ENCODE measurements at regions of chr11 and their contacts with region 1.

Region 1: DNA sequence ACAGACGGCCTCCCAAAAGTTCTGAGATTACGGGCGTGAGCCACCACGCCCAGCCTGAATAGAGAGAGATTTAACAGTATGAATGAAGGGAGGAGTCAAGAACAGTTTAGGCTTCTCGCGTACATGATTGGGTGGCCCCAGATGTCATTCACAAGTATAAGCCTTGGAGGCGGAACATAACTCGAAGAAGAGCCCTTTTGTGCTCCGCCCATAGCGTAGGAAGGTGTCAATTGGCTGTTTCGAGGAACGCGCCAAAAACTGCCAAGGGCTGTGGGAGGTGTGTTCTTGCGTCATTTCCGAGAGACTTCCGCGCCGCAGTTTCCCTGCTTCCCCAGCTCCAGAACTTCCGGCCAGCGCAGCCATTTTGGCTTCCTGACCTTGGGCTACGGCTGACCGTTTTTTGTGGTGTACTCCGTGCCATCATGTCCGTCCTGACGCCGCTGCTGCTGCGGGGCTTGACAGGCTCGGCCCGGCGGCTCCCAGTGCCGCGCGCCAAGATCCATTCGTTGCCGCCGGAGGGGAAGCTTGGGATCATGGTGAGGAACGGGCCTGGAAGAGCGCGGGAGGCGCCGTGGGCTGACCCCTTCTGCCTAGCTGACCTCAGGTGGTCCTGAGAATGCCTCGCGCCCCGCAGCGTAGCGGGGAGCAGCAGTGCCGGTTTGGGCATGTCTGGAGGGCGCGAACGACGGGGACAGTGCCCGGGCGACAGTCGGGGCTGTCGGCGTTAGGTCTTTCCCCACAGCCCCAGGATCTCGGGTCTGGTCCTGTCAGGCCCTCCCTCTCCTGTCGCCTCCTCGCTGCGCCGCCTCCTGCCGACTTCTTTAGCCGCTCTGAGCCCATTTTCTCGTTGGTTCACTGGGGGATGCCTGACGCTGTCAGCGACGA is at the start of gene COX8A:
- DNase-seq: peak; percentile 100
- H3K4me3 Mint-ChIP-seq: peak within 1 kb of the TSS; percentile 99
- H3K27ac Mint-ChIP-seq: peak within 1 kb of the TSS; percentile 99
- H3K4me1 Mint-ChIP-seq: peaks cover 6% of the 10 kb centered on the region
- H3K27me3 Mint-ChIP-seq: no peaks in the 10 kb centered on the region
- CTCF ChIP-seq: no peak
- total RNA-seq, gene COX8A: 461 and 466 TPM in 2 replicates

Region 2: DNA sequence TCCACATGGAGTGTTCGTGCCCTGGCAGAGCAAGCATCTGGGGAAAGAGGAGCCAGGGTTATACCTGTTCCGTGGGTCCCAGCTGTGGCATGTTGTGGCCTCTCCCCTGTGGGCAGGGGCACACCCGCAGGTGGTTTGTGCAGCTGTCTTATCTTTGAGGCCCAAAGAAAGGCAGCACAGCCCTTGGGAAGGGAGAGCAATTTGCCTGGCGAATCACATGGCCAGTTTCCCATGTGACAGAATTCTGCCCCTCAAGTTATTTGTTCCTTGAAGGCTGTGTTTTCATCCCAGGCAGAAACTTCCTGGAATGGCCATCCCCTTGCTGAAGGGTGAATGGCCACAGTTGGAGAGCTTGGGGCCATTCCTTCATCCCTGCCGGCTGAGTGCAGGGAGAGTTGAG is 16.5 kb before region 1 on chr11:
- CTCF ChIA-PET with region 1: no interaction called
- POLR2A ChIA-PET with region 1: interaction called, 11 read pairs
- intact Hi-C with region 1: no loop called
- DNase-seq: no peak
- H3K4me3 Mint-ChIP-seq: no peak overlapping the region
- H3K27ac Mint-ChIP-seq: no peak overlapping the region
- H3K4me1 Mint-ChIP-seq: peaks cover 5% of the 10 kb centered on the region
- H3K27me3 Mint-ChIP-seq: no peaks in the 10 kb centered on the region
- CTCF ChIP-seq: no peak

Region 3: DNA sequence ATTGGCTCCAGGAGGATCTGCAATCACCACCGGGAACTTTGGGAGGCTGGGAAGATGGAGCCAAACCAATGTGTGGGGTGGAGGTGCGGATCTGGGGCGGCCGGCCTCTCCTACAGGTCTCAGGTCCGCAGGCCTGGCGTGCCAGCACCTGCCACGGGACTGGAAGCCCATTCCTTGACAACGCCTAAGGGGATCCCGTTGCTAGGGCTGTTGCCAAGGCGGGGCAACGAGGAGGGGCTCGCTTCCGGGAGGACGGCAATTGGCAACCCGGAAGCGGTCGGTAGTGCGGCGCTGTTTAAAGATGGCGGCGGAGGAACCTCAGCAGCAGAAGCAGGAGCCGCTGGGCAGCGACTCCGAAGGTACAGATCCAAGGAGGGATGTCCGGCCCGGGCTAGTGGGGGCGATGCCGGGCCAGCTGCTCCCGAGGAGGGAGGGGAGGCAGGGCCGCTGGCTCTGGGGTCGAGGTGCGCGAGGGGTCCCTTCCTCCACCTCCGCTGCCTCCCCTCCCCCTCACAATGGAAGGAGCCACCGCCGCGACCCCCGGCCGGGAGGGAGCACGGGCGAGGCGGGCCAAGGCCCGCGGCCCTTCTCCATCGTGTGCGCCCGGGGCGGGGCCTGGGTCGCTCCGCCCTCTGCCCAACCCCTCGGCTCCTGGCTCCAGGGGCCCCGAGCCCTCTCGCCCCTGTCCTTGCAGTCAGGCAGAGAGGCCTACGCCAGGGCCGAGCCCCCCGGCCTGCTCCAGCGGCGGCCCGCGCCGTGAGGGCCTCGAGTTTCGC is 11.8 kb after region 1 on chr11 and contains the start of gene OTUB1:
- CTCF ChIA-PET with region 1: interaction called, 4 read pairs
- POLR2A ChIA-PET with region 1: interaction called, 36 read pairs
- intact Hi-C with region 1: loop called (anchors 1 kb)
- DNase-seq: peak; percentile 98
- H3K4me3 Mint-ChIP-seq: peak within 1 kb of the TSS; percentile 87
- H3K27ac Mint-ChIP-seq: peak within 1 kb of the TSS; percentile 96
- H3K4me1 Mint-ChIP-seq: peaks cover 10% of the 10 kb centered on the region
- H3K27me3 Mint-ChIP-seq: no peaks in the 10 kb centered on the region
- CTCF ChIP-seq: no peak
- total RNA-seq, gene OTUB1: 50.9 and 56.0 TPM in 2 replicates

Region 4: DNA sequence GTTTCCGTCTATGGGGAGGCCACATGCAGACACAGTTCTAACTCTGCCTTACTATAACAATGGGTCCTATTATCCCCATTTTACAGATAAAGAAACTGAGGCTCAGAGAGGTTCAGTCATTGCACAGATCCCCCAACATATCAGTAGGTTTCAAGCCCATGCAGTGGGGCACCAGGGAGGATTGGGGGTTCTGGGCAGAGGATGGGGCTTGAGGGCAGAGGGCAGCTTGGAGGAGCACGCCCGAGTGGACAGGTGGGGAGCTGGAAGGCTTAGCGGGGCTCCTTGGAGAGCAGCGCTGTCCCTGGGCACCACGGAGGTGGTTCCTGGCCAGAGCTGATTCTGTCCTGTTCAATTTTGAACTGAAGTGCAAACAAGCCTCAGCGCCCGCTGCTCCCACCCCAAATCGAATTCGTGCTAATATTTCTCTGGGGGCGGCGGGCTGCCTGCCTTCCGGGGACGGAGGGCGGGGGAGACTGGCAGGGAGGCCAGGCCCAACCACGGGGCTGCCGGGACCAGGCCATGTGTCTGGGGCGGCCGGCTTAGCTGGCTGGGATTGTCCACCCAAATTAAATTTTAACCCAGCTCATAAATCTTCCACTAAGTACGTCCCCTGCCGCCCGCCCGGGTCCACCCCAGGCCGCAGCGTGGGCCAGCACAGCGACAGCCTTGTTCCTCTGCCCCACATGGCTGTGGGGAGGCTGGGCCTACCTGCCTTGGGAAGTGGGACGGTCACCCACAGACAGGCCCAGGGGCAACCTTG is 110.6 kb after region 1 on chr11:
- CTCF ChIA-PET with region 1: no interaction called
- POLR2A ChIA-PET with region 1: no interaction called
- intact Hi-C with region 1: no loop called
- DNase-seq: no peak
- H3K4me3 Mint-ChIP-seq: no peak overlapping the region
- H3K27ac Mint-ChIP-seq: no peak overlapping the region
- H3K4me1 Mint-ChIP-seq: no peaks in the 10 kb centered on the region
- H3K27me3 Mint-ChIP-seq: no peaks in the 10 kb centered on the region
- CTCF ChIP-seq: no peak

Measured in MCF 10A (cell line).